T-cell (primary cell): ENCODE measurements at regions of chr1 and their contacts with region 1.

Region 1: GRCh38 chr1:224433701-224434672 is 610 bp downstream of the WDR26 start:
- DNase-seq: peak; percentile 13 to 66 (median 47)
- ATAC-seq: peak; percentile 18 to 38 (median 22)
- H3K4me3 ChIP-seq: peak overlapping the region; percentile 79 to 93
- H3K4me3 Mint-ChIP-seq: peak overlapping the region; percentile 85 to 91 (median 89)
- H3K27ac ChIP-seq: peak overlapping the region; percentile 92
- H3K27ac Mint-ChIP-seq: peak overlapping the region; percentile 86 to 91
- H3K4me1 ChIP-seq: peaks cover 18 to 44% of the 10 kb centered on the region in 2 experiments
- H3K4me1 Mint-ChIP-seq: peaks cover 61 to 67% (median 65%) of the 10 kb centered on the region in 3 donors
- H3K27me3 ChIP-seq: no peaks in the 10 kb centered on the region
- H3K27me3 Mint-ChIP-seq: no peaks in the 10 kb centered on the region

Region 2: GRCh38 chr1:224377676-224378006 is 56.3 kb before region 1 on chr1:
- CTCF ChIA-PET with region 1: interaction called in 1 of 2 experiments, 3 read pairs
- POLR2A ChIA-PET with region 1: interaction called, 3 to 12 read pairs
- DNase-seq: peak in 3 of 35 experiments; percentile 8 to 36 (median 11)
- ATAC-seq: peak; percentile 18 to 64 (median 50)
- H3K4me3 ChIP-seq: no peak overlapping the region
- H3K4me3 Mint-ChIP-seq: peak overlapping the region in 2 of 3 donors; percentile 41 to 60
- H3K27ac ChIP-seq: peak overlapping the region; percentile 62
- H3K27ac Mint-ChIP-seq: peak overlapping the region; percentile 88 to 91
- H3K4me1 ChIP-seq: peaks cover 75 to 81% of the 10 kb centered on the region in 2 experiments
- H3K4me1 Mint-ChIP-seq: peaks cover 92 to 96% (median 92%) of the 10 kb centered on the region in 3 donors
- H3K27me3 ChIP-seq: no peaks in the 10 kb centered on the region
- H3K27me3 Mint-ChIP-seq: no peaks in the 10 kb centered on the region